ENCODE measurements at regions of chr2 and their contacts with region 1.

Region 1: GRCh38 chr2:63698825-63699548 is 110.2 kb downstream of the MDH1 start:
- ATAC-seq: peak; percentile 96 to 98 (median 98)
- H3K4me3 ChIP-seq: no peak overlapping the region
- H3K27ac ChIP-seq: no peak overlapping the region
- H3K4me1 ChIP-seq: no peaks in the 10 kb centered on the region

Region 2: GRCh38 chr2:63801455-63801854 is 102.5 kb after region 1 on chr2:
- in situ Hi-C with region 1: no loop called
- ATAC-seq: no peak
- H3K4me3 ChIP-seq: no peak overlapping the region
- H3K27ac ChIP-seq: no peak overlapping the region
- H3K4me1 ChIP-seq: no peaks in the 10 kb centered on the region

Region 3: GRCh38 chr2:63888490-63889402 is 189.8 kb after region 1 on chr2:
- in situ Hi-C with region 1: loop called in 3 of 9 experiments (anchors 25 kb)
- ATAC-seq: peak; percentile 64 to 92 (median 79)
- H3K4me3 ChIP-seq: no peak overlapping the region
- H3K27ac ChIP-seq: no peak overlapping the region
- H3K4me1 ChIP-seq: no peaks in the 10 kb centered on the region